ENCODE measurements at regions of chr16 and their contacts with region 1.

Region 1: GRCh38 chr16:78705694-78706093 is 606.2 kb downstream of the WWOX start:
- DNase-seq: peak; percentile 27
- H3K4me3 Mint-ChIP-seq: no peak overlapping the region
- H3K27ac Mint-ChIP-seq: peak overlapping the region; percentile 41
- H3K4me1 Mint-ChIP-seq: peaks cover 13% of the 10 kb centered on the region
- H3K27me3 Mint-ChIP-seq: no peaks in the 10 kb centered on the region

Region 2: DNA sequence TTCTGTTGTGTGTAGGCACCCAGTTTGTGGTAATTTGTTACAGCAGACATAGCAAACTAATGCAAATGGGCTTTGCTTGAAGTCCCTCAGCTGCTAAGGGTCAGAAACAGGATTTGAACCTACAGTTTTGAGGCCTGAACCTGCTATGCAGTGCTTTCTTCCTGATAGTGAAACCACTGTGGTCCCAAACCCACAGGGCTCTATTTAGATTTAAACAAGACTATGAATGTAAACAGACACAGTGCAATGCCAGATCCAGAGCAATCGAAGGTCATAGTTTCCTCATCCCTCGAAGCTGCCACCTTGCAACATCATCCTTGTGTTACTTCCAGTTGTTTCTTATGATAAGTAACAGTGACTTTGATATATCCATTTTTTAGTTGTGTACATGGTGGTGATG is 24.0 kb after region 1 on chr16:
- CTCF ChIA-PET with region 1: no interaction called
- POLR2A ChIA-PET with region 1: no interaction called
- DNase-seq: no peak
- H3K4me3 Mint-ChIP-seq: no peak overlapping the region
- H3K27ac Mint-ChIP-seq: no peak overlapping the region
- H3K4me1 Mint-ChIP-seq: no peaks in the 10 kb centered on the region
- H3K27me3 Mint-ChIP-seq: no peaks in the 10 kb centered on the region

Region 3: DNA sequence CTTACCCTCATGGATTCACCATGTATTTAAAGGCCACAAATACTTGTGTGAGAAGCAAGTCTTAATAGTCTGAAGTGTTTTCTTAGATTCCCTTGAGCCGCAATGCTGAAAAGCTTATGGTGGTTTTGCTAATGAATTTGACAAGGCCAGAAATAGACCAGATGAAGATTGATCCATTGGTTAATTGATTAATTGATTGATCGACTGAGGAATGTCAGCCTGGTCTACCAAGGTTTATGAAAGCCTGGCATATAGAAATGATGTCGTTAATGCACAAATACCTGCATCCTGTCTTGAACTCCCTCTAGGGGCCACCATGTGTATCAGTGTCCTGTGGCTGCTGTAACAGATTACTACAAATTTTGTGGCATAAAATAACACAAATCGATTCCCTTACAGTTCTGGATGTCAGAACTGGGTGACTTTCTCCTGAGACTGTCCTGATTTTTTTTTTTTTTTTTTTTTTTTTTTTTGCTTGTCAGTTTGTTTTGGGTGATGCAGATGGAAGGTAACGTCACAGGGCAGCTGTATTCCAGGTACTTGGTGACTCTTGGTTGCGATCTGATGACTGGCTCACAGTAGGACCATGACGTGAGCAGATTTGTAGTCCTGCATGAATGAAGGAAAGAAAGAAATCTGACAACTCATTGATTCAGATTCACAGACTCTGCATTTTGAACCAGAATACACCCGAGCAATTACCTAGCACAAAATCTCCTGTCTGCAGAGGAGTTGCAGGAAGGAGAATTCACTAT is 341.7 kb after region 1 on chr16:
- CTCF ChIA-PET with region 1: interaction called, 10 read pairs
- POLR2A ChIA-PET with region 1: no interaction called
- DNase-seq: peak; percentile 29
- H3K4me3 Mint-ChIP-seq: no peak overlapping the region
- H3K27ac Mint-ChIP-seq: no peak overlapping the region
- H3K4me1 Mint-ChIP-seq: peaks cover 39% of the 10 kb centered on the region
- H3K27me3 Mint-ChIP-seq: no peaks in the 10 kb centered on the region